ENCODE measurements at regions of chr22 and their contacts with region 1.

Region 1: GRCh38 chr22:41091132-41092022 is 1.0 kb upstream of the EP300 start:
- DNase-seq: peak; percentile 98 to 99 (median 99)
- H3K4me3 ChIP-seq: peak overlapping the region; percentile 79 to 93
- H3K4me3 Mint-ChIP-seq: peak overlapping the region; percentile 93 to 100 (median 98)
- H3K27ac ChIP-seq: peak overlapping the region; percentile 99
- H3K27ac Mint-ChIP-seq: peak overlapping the region; percentile 97 to 100 (median 99)
- H3K4me1 ChIP-seq: peaks cover 27% of the 10 kb centered on the region
- H3K4me1 Mint-ChIP-seq: peaks cover 20 to 44% (median 27%) of the 10 kb centered on the region in 4 donors
- H3K27me3 ChIP-seq: no peaks in the 10 kb centered on the region
- H3K27me3 Mint-ChIP-seq: no peaks in the 10 kb centered on the region

Region 2: GRCh38 chr22:40856513-40857308 is 234.7 kb before region 1 on chr22 and contains the starts of genes ST13 and XPNPEP3:
- CTCF ChIA-PET with region 1: no interaction called
- POLR2A ChIA-PET with region 1: interaction called, 10 read pairs
- intact Hi-C with region 1: loop called (anchors 5 kb)
- DNase-seq: peak; percentile 97 to 98 (median 98)
- H3K4me3 ChIP-seq: peak within 1 kb of the TSS; percentile 72 to 100
- H3K4me3 Mint-ChIP-seq: peak within 1 kb of the TSS; percentile 96 to 99 (median 98)
- H3K27ac ChIP-seq: peak within 1 kb of the TSS; percentile 99
- H3K27ac Mint-ChIP-seq: peak within 1 kb of the TSS; percentile 98 to 100 (median 100)
- H3K4me1 ChIP-seq: peaks cover 53% of the 10 kb centered on the region
- H3K4me1 Mint-ChIP-seq: peaks cover 23 to 66% (median 45%) of the 10 kb centered on the region in 4 donors
- H3K27me3 ChIP-seq: no peaks in the 10 kb centered on the region
- H3K27me3 Mint-ChIP-seq: peaks cover 0 to 2% of the 10 kb centered on the region in 2 donors
- total RNA-seq, gene ST13: 161 to 168 TPM
- total RNA-seq, gene XPNPEP3: 18.6 to 20.0 TPM

Region 3: GRCh38 chr22:41062146-41062545 is 29.2 kb before region 1 on chr22:
- CTCF ChIA-PET with region 1: no interaction called
- POLR2A ChIA-PET with region 1: no interaction called
- intact Hi-C with region 1: no loop called
- DNase-seq: no peak
- H3K4me3 ChIP-seq: no peak overlapping the region
- H3K4me3 Mint-ChIP-seq: no peak overlapping the region
- H3K27ac ChIP-seq: no peak overlapping the region
- H3K27ac Mint-ChIP-seq: no peak overlapping the region
- H3K4me1 ChIP-seq: no peaks in the 10 kb centered on the region
- H3K4me1 Mint-ChIP-seq: no peaks in the 10 kb centered on the region
- H3K27me3 ChIP-seq: no peaks in the 10 kb centered on the region
- H3K27me3 Mint-ChIP-seq: no peaks in the 10 kb centered on the region

Region 4: DNA sequence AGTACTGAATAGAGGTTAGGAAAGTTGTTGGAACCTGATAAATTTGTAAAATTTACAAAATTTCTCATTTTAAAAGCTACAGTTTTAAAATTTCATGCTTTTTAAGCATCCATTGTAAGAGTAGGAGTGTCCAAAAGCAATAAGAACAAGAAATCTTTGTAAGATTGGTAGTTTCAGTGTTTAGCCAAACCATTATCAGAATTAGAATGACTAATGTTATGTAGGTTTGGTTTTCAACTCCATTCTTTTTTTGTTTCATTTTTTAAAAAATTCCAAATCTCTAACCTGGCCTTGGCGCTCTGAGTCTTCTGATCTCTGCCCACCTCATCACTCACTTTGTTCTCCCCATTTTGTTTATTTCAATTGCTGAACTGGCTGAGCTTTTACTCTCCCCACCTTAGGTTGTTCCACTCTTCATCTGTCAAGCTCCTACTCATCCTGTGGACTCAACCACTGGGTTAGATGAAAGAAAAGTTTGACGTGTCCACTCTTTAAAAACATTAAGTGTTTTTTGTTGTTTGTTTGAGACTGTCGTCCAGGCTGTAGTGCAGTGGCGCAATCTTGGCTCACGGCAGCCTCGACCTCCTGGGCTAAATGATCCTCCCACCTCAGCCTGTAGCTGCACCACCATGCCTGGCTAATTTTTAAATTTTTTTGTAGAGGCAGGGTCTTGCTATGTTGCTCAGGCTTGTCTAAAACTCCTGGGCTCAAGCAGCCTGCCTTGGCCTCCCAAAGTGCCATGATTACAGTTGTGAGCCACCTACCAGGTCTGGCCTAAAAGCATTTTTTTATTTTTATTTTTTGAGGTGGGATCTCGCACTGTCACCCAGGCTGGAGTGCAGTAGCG is 15.0 kb after region 1 on chr22:
- CTCF ChIA-PET with region 1: interaction called, 4 read pairs
- POLR2A ChIA-PET with region 1: interaction called, 38 read pairs
- intact Hi-C with region 1: no loop called
- DNase-seq: no peak
- H3K4me3 ChIP-seq: no peak overlapping the region
- H3K4me3 Mint-ChIP-seq: peak overlapping the region in 7 of 8 donors; percentile 18 to 73 (median 58)
- H3K27ac ChIP-seq: peak overlapping the region; percentile 20
- H3K27ac Mint-ChIP-seq: peak overlapping the region; percentile 11 to 89 (median 53)
- H3K4me1 ChIP-seq: peaks cover 56% of the 10 kb centered on the region
- H3K4me1 Mint-ChIP-seq: peaks cover 37 to 82% (median 58%) of the 10 kb centered on the region in 4 donors
- H3K27me3 ChIP-seq: no peaks in the 10 kb centered on the region
- H3K27me3 Mint-ChIP-seq: no peaks in the 10 kb centered on the region

Region 5: GRCh38 chr22:41204992-41205900 is 113.9 kb after region 1 on chr22 and contains the start of gene L3MBTL2:
- CTCF ChIA-PET with region 1: no interaction called
- POLR2A ChIA-PET with region 1: no interaction called
- intact Hi-C with region 1: loop called (anchors 2 kb)
- DNase-seq: peak; percentile 97 to 99 (median 98)
- H3K4me3 ChIP-seq: peak within 1 kb of the TSS; percentile 73 to 95
- H3K4me3 Mint-ChIP-seq: peak within 1 kb of the TSS; percentile 93 to 99 (median 96)
- H3K27ac ChIP-seq: peak within 1 kb of the TSS; percentile 85
- H3K27ac Mint-ChIP-seq: peak within 1 kb of the TSS; percentile 84 to 97 (median 93)
- H3K4me1 ChIP-seq: peaks cover 18% of the 10 kb centered on the region
- H3K4me1 Mint-ChIP-seq: peaks cover 15 to 40% (median 23%) of the 10 kb centered on the region in 4 donors
- H3K27me3 ChIP-seq: no peaks in the 10 kb centered on the region
- H3K27me3 Mint-ChIP-seq: peaks cover 3 to 6% of the 10 kb centered on the region in 2 donors
- total RNA-seq, gene L3MBTL2: 42.7 to 48.2 TPM